ENCODE measurements at regions of chr3 and their contacts with region 1.

Region 1: GRCh38 chr3:63232739-63233365 is 45.3 kb upstream of the SYNPR start:
- DNase-seq: no peak
- H3K4me3 ChIP-seq: no peak overlapping the region
- H3K27ac ChIP-seq: no peak overlapping the region
- H3K4me1 ChIP-seq: no peaks in the 10 kb centered on the region
- H3K27me3 ChIP-seq: no peaks in the 10 kb centered on the region
- CTCF ChIP-seq: peak in 4 of 6 experiments; percentile 21 to 47 (median 25)
- POLR2A ChIP-seq: no peak

Region 2: DNA sequence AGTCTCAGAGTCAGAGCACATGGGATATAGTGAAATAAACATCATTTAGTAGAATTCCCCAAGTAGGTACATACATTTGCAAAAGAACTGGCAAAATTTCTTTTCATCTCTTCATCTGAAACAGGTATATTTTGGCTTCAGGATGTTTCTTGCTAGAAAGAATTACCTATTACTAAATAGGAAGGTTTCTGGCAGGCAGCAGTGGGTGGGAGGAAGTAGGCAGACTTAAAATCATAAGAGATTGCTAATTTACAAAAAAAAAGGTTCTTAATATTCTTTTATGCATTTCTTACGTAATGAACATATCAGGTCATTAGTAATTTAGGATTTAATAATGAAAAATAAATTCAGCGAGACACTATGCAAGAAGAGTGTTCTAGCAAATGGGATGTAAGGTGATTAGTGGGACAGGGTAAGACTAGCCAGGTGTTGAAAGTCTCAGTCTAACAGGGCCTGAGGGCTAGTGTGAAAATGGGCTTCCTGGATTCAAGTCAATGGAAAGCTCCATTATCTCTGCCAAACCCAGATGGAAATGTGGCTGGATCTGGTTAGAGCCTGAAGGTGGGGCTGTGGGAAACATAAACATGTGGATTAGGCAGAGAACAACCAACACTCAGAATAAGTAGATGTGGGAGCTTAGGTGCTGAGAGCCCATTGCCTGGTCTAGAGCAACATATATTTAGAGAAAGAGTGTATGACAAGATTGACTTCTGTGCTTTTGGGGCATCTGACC is 732.1 kb before region 1 on chr3:
- intact Hi-C with region 1: no loop called
- DNase-seq: no peak
- H3K4me3 ChIP-seq: no peak overlapping the region
- H3K27ac ChIP-seq: no peak overlapping the region
- H3K4me1 ChIP-seq: no peaks in the 10 kb centered on the region
- H3K27me3 ChIP-seq: peaks cover 6% of the 10 kb centered on the region
- CTCF ChIP-seq: no peak
- POLR2A ChIP-seq: no peak

Region 3: GRCh38 chr3:62622553-62623193 is 610.2 kb before region 1 on chr3:
- intact Hi-C with region 1: loop called in 1 of 2 experiments (anchors 10 kb)
- DNase-seq: peak in 4 of 7 donors; percentile 12 to 59 (median 24)
- H3K4me3 ChIP-seq: no peak overlapping the region
- H3K27ac ChIP-seq: no peak overlapping the region
- H3K4me1 ChIP-seq: no peaks in the 10 kb centered on the region
- H3K27me3 ChIP-seq: peaks cover 3% of the 10 kb centered on the region
- CTCF ChIP-seq: peak; percentile 55 to 72 (median 70)
- POLR2A ChIP-seq: no peak

Region 4: GRCh38 chr3:62665598-62666437 is 567.0 kb before region 1 on chr3:
- intact Hi-C with region 1: loop called in 1 of 2 experiments (anchors 10 kb)
- DNase-seq: peak; percentile 49 to 93 (median 67)
- H3K4me3 ChIP-seq: no peak overlapping the region
- H3K27ac ChIP-seq: no peak overlapping the region
- H3K4me1 ChIP-seq: no peaks in the 10 kb centered on the region
- H3K27me3 ChIP-seq: peaks cover 5% of the 10 kb centered on the region
- CTCF ChIP-seq: peak; percentile 40 to 75 (median 69)
- POLR2A ChIP-seq: no peak

Region 5: GRCh38 chr3:63328365-63328764 is 95.5 kb after region 1 on chr3:
- intact Hi-C with region 1: no loop called
- DNase-seq: no peak
- H3K4me3 ChIP-seq: no peak overlapping the region
- H3K27ac ChIP-seq: no peak overlapping the region
- H3K4me1 ChIP-seq: no peaks in the 10 kb centered on the region
- H3K27me3 ChIP-seq: no peaks in the 10 kb centered on the region
- CTCF ChIP-seq: no peak
- POLR2A ChIP-seq: no peak